ENCODE measurements at regions of chr3 and their contacts with region 1.

Region 1: DNA sequence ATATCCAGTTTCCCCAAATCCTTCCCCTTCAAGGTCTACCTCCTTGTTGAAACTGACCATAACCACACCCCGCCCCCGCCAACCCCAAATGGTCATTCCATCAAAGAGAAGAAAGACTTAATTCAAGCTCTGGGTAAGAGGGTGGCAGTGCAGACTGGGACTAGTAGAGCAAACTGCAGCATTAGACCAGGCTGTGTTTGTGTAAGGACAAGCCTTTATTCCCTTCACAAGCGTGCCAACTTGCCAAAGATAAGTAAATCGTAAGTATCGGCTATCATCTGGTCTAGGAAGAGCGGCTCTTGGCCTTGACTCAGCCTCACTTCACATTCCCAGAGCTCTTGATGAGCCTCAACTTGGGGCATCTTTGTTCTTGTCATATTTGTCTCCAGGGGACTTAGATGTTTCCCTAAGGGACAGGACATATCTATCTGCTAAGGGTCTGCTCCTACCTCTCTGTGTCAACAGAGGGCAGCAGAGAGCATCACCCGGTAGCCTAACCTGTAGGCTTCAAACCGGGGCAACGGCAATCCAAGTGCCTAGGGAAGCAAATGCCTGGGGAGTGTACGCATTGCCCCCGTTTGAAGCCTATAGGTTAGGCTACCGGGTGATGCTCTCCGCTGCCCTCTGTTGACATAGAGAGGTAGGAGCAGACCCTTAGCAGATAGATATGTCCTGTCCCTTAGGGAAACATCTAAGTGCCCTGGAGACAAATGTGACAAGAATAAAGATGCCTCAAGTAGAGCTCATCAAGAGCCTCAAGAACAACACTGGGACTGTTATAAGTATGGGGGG is 8.9 kb upstream of the MAP3K13 start:
- DNase-seq: peak; percentile 57 to 88
- H3K4me3 ChIP-seq: no peak overlapping the region
- CTCF ChIP-seq: no peak
- POLR2A ChIP-seq: no peak

Region 2: DNA sequence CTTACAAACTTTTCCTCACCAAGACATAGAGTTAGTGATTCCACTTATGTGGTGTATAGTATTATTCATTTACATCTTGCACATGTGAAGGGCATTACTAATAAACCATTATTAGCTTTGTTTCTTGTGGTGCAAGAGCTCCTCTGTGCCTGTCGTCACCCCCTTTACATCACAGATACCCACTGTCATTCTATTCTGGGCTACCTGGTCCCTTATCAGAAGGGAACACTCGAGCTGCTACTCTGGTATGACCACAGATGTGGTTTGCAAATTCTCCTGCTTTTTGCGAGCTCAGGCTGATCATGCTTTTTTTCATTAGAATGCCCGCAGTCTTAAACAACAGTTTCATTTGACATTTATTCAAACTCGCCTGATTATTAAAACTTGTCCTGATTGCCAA is 218.2 kb after region 1 on chr3:
- intact Hi-C with region 1: loop called (anchors 10 kb)
- DNase-seq: no peak
- H3K4me3 ChIP-seq: no peak overlapping the region
- CTCF ChIP-seq: no peak
- POLR2A ChIP-seq: no peak

Measured in lower leg skin (tissue), 4 donors.